Psoas muscle (tissue), 8 donors: ENCODE measurements at regions of chr20 and their contacts with region 1.

Region 1: DNA sequence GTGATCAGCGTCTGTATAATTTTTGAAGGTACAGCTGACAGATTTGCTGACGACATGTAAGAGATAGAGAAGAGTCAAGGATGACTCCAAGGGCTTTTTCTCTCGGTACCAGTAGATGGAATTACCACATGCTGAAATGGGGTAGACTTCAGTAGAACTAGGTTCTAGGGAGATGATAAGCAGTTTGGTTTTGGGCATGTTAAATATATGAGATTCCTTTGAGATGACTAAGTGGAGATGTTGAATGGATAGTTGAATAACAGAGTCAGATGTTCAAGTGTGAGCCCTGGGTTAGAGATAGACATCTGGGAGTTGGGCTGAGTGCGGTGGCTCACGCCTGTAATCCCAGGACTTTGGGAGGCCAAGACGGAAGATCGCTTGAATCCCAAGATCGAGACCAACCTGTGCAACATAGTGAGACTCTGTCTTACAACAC is 50.0 kb downstream of the PHF20 start:
- DNase-seq: no peak
- ATAC-seq: no peak
- H3K4me3 ChIP-seq: no peak overlapping the region
- H3K27ac ChIP-seq: peak overlapping the region; percentile 4
- H3K4me1 ChIP-seq: peaks cover 29% of the 10 kb centered on the region
- H3K27me3 ChIP-seq: no peaks in the 10 kb centered on the region
- CTCF ChIP-seq: no peak

Region 2: DNA sequence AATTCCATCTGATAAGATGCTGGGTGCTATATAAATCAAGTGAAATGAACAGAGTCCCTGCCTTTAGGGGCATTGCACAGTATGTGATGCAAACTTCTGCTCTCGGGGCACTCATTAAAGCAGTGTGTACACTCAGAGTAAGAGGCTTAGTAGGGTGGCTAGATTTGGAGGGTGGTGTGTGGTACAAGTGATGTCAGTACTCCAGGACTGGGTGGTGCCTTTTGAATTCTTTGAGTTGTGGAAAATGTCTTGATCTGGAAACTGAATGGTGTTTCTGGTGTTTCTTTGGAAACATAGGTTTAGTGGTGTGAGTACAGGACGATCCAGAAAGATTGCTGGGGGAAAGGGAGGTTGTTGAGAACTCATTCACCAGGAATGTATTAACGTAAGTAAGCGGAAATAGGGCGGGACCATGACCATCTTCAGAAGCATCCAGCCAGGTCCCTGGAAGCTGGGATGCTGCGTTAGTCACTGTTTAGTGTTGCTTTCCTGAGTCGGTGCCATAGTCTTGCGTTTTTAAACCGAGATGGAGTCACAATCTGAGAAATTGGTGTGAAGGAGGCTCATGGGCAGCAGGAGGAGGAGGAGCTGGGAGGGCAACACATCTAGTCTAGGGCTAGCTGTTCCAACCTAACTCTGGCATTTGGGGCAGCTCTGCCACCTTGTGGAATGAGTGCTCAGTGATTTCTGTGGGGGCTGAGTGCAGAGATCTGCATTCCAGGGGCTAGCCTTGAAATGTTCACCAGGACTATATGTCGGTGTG is 62.1 kb after region 1 on chr20:
- intact Hi-C with region 1: loop called in 1 of 2 experiments (anchors 10 kb)
- DNase-seq: peak; percentile 77 to 85
- ATAC-seq: peak; percentile 82 to 87 (median 83)
- H3K4me3 ChIP-seq: no peak overlapping the region
- H3K27ac ChIP-seq: peak overlapping the region; percentile 80
- H3K4me1 ChIP-seq: peaks cover 45% of the 10 kb centered on the region
- H3K27me3 ChIP-seq: no peaks in the 10 kb centered on the region
- CTCF ChIP-seq: peak; percentile 77